ENCODE measurements at regions of chr6 and their contacts with region 1.

Region 1: GRCh38 chr6:35757456-35758123 is 18.8 kb upstream of the CLPSL2 start:
- DNase-seq: no peak
- H3K4me3 ChIP-seq: no peak overlapping the region
- H3K27ac ChIP-seq: no peak overlapping the region
- H3K4me1 ChIP-seq: no peaks in the 10 kb centered on the region
- H3K27me3 ChIP-seq: no peaks in the 10 kb centered on the region
- CTCF ChIP-seq: no peak
- EP300 ChIP-seq: no peak
- POLR2A ChIP-seq: no peak

Region 2: GRCh38 chr6:35327349-35328027 is 430.1 kb before region 1 on chr6:
- intact Hi-C with region 1: no loop called
- DNase-seq: peak in 3 of 5 donors; percentile 32 to 56 (median 44)
- H3K4me3 ChIP-seq: no peak overlapping the region
- H3K27ac ChIP-seq: no peak overlapping the region
- H3K4me1 ChIP-seq: no peaks in the 10 kb centered on the region
- H3K27me3 ChIP-seq: no peaks in the 10 kb centered on the region
- CTCF ChIP-seq: peak in 1 of 3 donors; percentile 30
- EP300 ChIP-seq: no peak
- POLR2A ChIP-seq: no peak

Region 3: DNA sequence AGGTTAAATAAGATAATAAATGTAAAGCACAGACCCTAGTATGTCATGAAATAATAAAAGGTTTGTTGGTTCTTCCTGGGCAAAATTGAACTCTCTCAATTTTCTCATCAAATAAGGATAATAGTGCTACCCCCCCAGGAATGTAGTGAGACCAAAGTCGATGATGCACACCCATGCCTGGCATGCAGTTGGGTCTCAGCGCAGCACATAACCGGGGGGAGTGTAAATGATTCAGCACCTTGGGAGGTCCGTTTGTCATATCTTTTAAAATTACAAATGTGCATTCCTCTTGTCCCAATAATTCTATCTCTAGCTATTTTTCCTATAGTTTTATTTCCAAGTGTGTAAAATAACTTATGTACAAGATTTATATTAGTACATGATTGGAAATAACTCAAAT is 1773.4 kb after region 1 on chr6:
- intact Hi-C with region 1: loop called in 1 of 4 experiments (anchors 5 kb)
- DNase-seq: no peak
- H3K4me3 ChIP-seq: no peak overlapping the region
- H3K27ac ChIP-seq: no peak overlapping the region
- H3K4me1 ChIP-seq: peaks cover 3% of the 10 kb centered on the region
- H3K27me3 ChIP-seq: no peaks in the 10 kb centered on the region
- CTCF ChIP-seq: no peak
- EP300 ChIP-seq: no peak
- POLR2A ChIP-seq: no peak